GM13977 (cell line): ENCODE measurements at regions of chr7 and their contacts with region 1.

Region 1: GRCh38 chr7:45917658-45918057 is 3.4 kb downstream of the IGFBP3 start:
- DNase-seq: peak; percentile 83
- CTCF ChIP-seq: peak; percentile 94

Region 2: GRCh38 chr7:45599851-45600706 is 317.6 kb before region 1 on chr7:
- in situ Hi-C with region 1: no loop called
- DNase-seq: no peak
- CTCF ChIP-seq: no peak

Region 3: DNA sequence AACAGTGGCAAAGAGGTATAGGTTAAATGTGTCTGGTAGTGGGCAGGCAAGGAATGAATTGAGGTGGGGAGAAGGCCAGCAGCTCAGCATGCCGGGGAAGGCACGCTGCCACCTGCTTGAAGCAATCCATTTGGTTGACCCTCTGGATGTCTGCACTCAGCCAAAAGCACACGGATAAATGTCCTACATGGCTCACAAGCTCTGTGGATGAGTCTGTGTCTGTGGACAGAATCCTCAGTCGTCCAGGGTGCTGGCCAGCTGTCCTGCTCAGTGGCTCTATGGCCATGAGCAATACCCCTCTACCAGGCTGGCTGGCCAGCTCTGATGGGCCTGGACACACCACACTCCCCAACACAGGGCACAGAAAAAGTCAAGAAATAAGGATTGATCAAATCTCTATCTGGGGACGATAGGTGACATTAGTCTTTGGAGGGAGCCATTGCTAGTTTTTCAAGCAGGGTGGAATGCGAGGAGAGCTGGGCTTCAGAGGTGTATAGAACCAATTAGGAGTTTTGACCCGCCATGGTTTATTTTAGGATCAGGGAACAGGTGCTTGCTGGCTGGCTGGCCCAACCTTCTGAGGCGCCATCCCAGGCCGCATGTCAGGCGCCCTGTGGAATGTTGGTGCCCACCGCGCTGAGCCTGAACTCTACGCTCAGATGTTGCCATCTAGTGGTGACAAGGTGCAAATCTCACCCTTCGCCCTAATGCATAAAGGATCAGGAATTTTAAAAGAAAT is 1170.8 kb after region 1 on chr7:
- in situ Hi-C with region 1: loop called (anchors 10 kb)
- DNase-seq: peak; percentile 60
- CTCF ChIP-seq: peak; percentile 88

Region 4: DNA sequence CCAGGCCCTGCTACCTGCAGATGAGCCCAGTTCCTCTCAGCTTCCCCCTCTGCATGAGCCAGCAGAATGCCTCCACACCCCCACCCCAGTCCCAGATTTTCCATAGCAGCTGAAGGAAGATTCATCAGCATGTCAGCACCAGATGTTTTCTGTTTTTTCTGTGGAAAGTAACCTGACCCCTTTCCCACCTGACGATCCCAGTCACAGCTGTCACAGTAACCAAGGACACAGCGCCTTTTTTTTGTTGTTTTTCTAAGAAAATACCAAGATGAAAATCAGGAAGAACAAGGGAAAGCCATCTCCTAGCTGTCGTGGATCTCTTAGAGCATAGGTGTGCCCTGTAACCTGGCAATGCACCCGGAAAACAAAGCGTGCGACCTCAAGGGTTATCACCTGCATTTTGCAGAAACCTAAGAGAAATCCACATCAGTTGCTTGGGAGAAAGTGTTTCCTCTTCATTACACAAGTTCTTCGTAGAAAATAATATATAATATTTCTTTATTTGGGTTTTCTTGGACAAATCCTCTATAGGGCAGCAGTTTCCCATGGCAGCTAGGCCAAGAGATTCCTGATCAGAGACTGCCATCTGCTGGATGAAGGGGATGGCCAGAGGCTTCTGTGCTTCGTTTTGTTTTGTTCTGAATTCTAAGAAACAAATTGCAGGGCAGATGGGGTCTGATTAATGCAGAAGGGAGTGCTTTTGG is 1262.3 kb after region 1 on chr7:
- in situ Hi-C with region 1: loop called (anchors 25 kb)
- DNase-seq: peak; percentile 44
- CTCF ChIP-seq: peak; percentile 75